PC-9 (cell line): ENCODE measurements at regions of chr12 and their contacts with region 1.

Region 1: DNA sequence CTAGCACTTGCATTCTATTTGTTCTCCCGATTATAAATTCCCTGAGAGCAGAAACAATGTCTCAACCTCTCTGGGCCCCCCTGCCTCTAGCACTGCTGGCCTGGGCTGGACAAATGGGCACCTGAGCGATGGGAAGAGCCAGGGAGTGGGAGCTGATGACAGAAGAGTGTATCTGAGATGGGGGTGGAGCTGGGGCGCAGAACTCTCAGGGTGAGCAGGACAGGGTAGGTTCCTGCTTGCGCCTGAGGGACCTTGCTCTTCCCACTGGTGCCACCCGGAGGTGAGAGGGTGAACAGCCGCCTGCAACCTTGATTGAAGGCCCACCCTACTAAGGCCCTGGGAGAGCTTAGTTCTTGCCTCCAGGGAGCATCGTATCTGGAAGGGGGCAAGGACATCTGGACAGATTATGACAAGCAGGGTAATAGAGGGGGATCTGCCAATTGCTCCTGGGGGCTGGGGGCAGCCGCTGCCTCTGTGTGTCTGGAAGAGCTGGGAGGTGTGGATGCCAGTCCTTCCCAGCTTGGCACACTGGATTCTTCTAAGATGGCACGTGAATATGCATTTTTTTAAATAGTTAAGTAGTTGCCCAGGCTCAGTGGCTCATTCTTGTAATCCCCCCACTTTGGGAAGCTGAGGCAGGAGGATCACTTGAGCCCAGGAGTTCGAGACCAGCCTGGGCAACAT is 43.0 kb upstream of the TSPAN9 start:
- DNase-seq: peak in 1 of 2 experiments; percentile 71
- H3K4me3 ChIP-seq: no peak overlapping the region
- H3K27ac ChIP-seq: no peak overlapping the region
- H3K4me1 ChIP-seq: no peaks in the 10 kb centered on the region
- H3K27me3 ChIP-seq: no peaks in the 10 kb centered on the region
- CTCF ChIP-seq: peak; percentile 80

Region 2: GRCh38 chr12:2884810-2885209 is 149.4 kb before region 1 on chr12:
- CTCF ChIA-PET with region 1: no interaction called
- POLR2A ChIA-PET with region 1: no interaction called
- intact Hi-C with region 1: loop called (anchors 2 kb)
- DNase-seq: no peak
- H3K4me3 ChIP-seq: no peak overlapping the region
- H3K27ac ChIP-seq: no peak overlapping the region
- H3K4me1 ChIP-seq: no peaks in the 10 kb centered on the region
- H3K27me3 ChIP-seq: no peaks in the 10 kb centered on the region
- CTCF ChIP-seq: no peak

Region 3: DNA sequence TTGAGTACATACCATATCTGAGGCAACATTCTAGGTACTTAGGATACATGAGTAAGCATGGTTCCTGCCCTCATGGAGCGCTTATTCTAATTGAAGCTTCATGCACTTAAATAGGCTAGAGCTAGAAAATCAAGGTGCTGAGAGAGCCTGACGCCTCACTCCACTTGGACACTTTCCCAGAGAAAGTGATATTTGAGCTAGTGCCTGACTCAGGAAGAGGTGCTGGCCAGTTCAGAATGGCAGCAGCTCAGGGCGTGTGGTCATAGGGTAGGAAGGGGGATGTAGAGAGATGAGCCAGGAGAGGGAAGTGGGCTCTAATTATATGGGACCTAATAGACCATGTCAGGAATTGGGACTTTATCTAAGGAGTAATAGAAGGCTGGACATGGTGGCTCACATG is 110.2 kb before region 1 on chr12:
- CTCF ChIA-PET with region 1: no interaction called
- POLR2A ChIA-PET with region 1: no interaction called
- intact Hi-C with region 1: no loop called
- DNase-seq: no peak
- H3K4me3 ChIP-seq: no peak overlapping the region
- H3K27ac ChIP-seq: no peak overlapping the region
- H3K4me1 ChIP-seq: no peaks in the 10 kb centered on the region
- H3K27me3 ChIP-seq: no peaks in the 10 kb centered on the region
- CTCF ChIP-seq: no peak

Region 4: DNA sequence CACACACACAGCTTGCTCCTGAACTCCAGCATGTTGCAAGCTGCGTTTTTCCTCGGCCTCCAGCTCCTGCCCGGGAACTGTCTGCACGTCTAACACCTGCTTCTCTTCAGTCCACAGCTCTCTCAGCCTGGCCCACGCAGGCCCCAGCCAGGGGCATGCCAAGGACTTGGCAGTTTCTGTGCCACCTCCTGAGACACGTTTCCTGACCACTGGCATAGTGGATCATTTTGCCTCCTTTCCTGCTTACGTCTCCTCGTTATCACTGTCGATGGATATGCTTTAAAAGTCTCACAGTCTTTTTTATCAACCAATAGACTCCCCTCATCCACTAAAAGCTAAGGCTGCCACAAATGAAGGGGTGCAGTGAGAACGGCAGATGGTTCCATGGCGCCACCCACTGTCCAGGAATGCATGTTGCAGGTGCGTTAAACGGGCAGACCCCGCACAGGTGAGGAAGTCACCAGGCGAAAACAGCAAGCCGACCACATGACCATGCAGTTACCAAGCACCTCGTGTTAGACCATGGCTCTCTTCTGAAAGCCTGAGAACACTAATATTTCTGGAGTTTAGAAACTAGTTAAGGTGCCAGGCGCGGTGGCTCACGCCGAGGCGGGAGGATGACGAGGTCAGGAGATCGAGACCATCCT is 89.7 kb before region 1 on chr12:
- CTCF ChIA-PET with region 1: interaction called, 17 read pairs
- POLR2A ChIA-PET with region 1: no interaction called
- intact Hi-C with region 1: no loop called
- DNase-seq: peak; percentile 60 to 81
- H3K4me3 ChIP-seq: peak overlapping the region; percentile 45; the same call in 1 of the 2 replicates
- H3K27ac ChIP-seq: no peak overlapping the region
- H3K4me1 ChIP-seq: no peaks in the 10 kb centered on the region
- H3K27me3 ChIP-seq: no peaks in the 10 kb centered on the region
- CTCF ChIP-seq: peak; percentile 95